ENCODE measurements at regions of chr15 and their contacts with region 1.

Region 1: GRCh38 chr15:44222478-44222877 is 27.4 kb upstream of the FRMD5 start:
- DNase-seq: no peak
- ATAC-seq: no peak
- H3K4me3 ChIP-seq: no peak overlapping the region
- H3K27ac ChIP-seq: no peak overlapping the region
- H3K4me1 ChIP-seq: no peaks in the 10 kb centered on the region
- H3K27me3 ChIP-seq: no peaks in the 10 kb centered on the region
- CTCF ChIP-seq: no peak

Region 2: DNA sequence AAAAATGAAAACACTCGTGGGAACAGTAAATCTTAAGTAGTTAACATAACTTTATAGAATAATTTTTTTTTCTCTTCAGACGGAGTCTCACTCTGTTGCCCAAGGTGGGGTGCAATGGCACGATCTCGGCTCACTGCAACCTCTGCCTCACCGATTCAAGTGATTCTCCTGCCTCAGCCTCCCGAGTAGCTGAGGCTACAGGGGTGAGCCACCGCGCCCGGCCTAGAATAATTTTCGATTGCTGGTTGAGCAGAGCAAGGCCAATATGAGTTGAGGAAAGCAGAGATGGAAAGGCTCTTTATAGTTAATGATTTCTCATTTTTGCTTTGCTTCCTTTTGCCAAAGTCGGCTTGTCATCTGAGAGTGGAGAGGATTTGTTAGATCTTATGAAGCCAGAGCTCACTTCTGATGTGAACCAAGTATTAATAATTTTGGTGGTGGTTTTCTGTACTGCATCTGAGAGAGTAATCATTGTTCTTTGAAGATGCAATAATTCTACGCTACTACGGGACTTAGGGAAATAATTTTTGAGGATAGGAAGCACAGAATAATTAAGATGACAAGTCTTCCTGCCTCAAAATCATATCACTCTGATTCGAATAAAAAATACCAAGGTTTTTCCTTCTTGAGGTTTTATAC is 64.5 kb after region 1 on chr15:
- CTCF ChIA-PET with region 1: no interaction called
- POLR2A ChIA-PET with region 1: no interaction called
- in situ Hi-C with region 1: no loop called
- intact Hi-C with region 1: loop called (anchors 10 kb)
- DNase-seq: no peak
- ATAC-seq: no peak
- H3K4me3 ChIP-seq: peak overlapping the region; percentile 80 to 91; a peak in 3 of 4 replicates
- H3K27ac ChIP-seq: peak overlapping the region; percentile 94; the same call in 1 of the 2 replicates
- H3K4me1 ChIP-seq: peaks cover 20% of the 10 kb centered on the region; the same call in 1 of the 2 replicates
- H3K27me3 ChIP-seq: no peaks in the 10 kb centered on the region
- CTCF ChIP-seq: no peak

Measured in Panc1 (cell line).